Brain microvascular endothelial cell (primary cell): ENCODE measurements at regions of chr3 and their contacts with region 1.

Region 1: DNA sequence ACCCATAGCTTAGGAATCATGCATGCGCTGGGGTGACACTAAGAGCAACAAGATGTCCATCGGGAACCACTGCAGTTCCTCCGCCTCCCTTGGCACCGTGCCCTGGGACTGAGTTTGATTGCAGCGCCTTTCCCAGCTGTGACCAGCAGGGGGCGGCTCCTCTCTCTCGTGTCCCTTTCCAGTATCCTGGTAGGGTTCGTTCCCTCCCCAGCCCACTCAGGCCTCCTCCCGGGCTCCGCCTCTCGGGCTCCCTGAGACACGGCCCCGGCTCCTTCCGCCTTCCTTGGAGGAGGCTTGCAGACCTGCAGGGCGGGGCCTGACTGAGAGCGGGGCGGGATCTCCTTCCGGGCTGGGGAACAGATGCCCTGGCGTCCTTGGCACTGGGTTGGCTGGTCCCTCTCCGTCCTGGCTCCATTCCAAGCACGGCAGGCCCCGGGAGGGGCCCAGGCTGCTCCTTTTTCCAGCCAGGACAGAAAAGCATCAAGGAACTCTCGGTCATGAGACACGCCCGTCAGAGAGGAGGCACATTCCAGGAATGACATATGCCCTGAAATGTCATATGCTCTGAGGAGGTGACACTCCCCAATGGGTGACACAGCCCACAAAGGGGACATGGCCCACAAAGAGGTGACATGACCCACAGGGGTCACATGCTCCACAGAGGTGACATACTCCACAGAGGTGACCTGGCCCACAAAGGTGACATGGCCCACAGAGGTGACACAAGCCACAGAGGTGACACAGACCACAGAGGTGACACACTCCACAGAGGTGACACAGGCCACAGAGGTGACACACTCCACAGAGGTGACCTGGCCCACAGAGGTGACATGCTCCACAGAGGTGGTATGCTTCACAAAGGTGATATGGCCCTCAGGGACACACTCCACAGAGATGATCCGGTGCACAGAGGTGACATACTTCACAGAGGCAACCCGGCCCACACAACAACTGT is 79.0 kb downstream of the ABHD5 start:
- DNase-seq: peak; percentile 97
- H3K4me3 ChIP-seq: peak overlapping the region; percentile 54
- H3K27ac ChIP-seq: no peak overlapping the region
- H3K27me3 ChIP-seq: no peaks in the 10 kb centered on the region
- CTCF ChIP-seq: peak; percentile 96

Region 2: GRCh38 chr3:42979044-42979972 is 790.4 kb before region 1 on chr3 and contains the start of gene GASK1A:
- in situ Hi-C with region 1: no loop called
- DNase-seq: no peak
- H3K4me3 ChIP-seq: peak within 1 kb of the TSS; percentile 33
- H3K27ac ChIP-seq: no peak within 1 kb of the TSS
- H3K27me3 ChIP-seq: peaks cover 29% of the 10 kb centered on the region
- CTCF ChIP-seq: no peak

Region 3: GRCh38 chr3:43855674-43856299 is 86.0 kb after region 1 on chr3:
- in situ Hi-C with region 1: loop called (anchors 25 kb)
- DNase-seq: peak; percentile 48
- H3K4me3 ChIP-seq: no peak overlapping the region
- H3K27ac ChIP-seq: no peak overlapping the region
- H3K27me3 ChIP-seq: no peaks in the 10 kb centered on the region
- CTCF ChIP-seq: peak; percentile 93

Region 4: DNA sequence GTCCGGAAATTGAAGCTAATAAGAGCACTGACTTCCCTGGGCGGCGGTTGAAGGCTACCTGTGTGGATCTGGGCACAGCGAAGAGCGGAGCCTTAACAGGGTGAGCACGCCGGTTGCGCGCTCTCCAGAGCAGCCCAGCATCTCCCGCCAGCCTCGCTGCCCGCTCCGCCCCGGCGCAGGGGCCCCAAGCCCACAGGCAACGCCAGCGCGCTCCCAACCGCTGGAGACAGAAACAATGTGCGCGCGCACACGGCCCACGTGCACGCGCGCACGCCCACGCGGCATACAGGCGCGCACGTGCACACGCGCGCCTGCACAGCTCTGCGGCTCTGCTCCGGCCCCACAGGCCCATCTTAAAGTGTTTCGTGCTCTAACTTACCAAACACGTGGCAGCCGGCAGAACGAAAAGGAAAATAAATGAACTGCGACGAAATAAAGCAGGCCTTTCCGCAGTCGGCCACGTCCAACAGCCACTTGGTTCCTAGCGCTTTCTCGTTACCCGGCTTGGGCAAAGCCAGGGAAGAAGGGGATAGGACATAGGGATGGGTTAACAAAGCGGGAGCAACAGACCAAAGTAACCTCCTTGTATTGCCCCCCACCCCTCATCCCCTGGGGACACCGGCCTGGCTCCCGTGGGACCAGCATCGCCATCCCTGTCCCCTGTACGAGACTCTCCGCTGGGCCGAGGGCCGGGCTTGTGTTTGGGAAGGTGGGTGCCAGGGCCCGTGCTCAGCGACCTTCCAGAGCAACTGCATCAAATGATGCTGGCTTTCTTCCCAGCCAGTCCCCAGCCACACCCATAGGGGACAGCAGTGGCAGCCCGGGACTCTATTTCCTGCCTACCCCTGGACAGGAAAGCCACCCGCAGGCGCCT is 124.7 kb after region 1 on chr3:
- in situ Hi-C with region 1: no loop called
- DNase-seq: peak; percentile 41
- H3K4me3 ChIP-seq: peak overlapping the region; percentile 65
- H3K27ac ChIP-seq: peak overlapping the region; percentile 14
- H3K27me3 ChIP-seq: no peaks in the 10 kb centered on the region
- CTCF ChIP-seq: peak; percentile 28